Colonic mucosa (tissue), 4 donors: ENCODE measurements at regions of chr11 and their contacts with region 1.

Region 1: DNA sequence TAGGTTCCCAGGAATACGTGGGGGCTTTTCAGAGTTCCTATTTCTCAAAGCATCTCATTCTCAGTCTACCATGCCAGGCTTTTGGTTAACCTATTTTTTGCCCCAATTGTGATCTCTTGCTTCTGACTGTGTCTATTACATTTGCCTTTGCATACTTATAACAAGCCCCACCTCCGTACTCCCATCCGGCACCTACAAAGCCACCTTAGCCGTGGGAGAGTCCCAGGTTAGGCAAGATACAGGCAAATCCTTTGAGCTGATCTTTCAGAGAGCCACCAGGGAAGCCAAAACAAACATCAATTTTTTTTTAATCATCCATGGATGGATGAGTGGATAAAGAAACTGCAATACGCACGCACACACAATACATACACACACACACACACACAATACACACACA is 18.6 kb upstream of the PANX3 start:
- DNase-seq: no peak
- H3K4me3 ChIP-seq: no peak overlapping the region
- H3K27ac ChIP-seq: no peak overlapping the region
- H3K4me1 ChIP-seq: no peaks in the 10 kb centered on the region
- H3K27me3 ChIP-seq: no peaks in the 10 kb centered on the region
- CTCF ChIP-seq: no peak

Region 2: GRCh38 chr11:124256076-124256475 is 336.6 kb before region 1 on chr11 and contains the start of gene OR8G5:
- intact Hi-C with region 1: no loop called
- DNase-seq: no peak
- H3K4me3 ChIP-seq: no peak within 1 kb of the TSS
- H3K27ac ChIP-seq: no peak within 1 kb of the TSS
- H3K4me1 ChIP-seq: no peaks in the 10 kb centered on the region
- H3K27me3 ChIP-seq: no peaks in the 10 kb centered on the region
- CTCF ChIP-seq: no peak
- total RNA-seq, gene OR8G5: not detected

Region 3: DNA sequence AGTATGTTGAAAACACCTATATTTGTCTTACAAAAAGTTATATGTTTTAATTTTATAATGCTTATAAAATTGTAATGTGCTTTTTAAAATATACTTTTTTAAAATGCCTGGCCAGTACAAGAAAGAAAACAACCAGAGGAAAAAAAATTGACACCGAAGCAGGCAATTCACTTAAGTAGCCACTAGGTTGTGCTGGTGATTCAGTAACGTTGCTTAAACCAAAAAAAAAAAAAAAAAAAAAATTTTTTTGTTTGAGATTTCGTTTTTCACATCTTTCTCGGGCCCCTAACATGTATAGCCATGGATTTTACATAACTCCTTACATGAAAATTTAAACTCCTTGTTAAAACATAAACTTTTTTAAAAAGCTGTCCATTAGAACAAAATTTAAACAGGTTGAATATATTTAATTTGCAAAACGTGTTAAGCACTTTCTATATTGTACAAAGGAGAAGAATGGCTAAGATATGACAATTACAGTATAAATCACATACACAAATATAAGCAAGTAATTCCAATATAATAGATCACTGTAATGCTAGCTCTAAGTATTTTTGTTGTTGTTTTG is 177.2 kb before region 1 on chr11:
- intact Hi-C with region 1: loop called (anchors 5 kb)
- DNase-seq: no peak
- H3K4me3 ChIP-seq: no peak overlapping the region
- H3K27ac ChIP-seq: no peak overlapping the region
- H3K4me1 ChIP-seq: no peaks in the 10 kb centered on the region
- H3K27me3 ChIP-seq: no peaks in the 10 kb centered on the region
- CTCF ChIP-seq: peak; percentile 86